ENCODE measurements at regions of chr21 and their contacts with region 1.

Region 1: DNA sequence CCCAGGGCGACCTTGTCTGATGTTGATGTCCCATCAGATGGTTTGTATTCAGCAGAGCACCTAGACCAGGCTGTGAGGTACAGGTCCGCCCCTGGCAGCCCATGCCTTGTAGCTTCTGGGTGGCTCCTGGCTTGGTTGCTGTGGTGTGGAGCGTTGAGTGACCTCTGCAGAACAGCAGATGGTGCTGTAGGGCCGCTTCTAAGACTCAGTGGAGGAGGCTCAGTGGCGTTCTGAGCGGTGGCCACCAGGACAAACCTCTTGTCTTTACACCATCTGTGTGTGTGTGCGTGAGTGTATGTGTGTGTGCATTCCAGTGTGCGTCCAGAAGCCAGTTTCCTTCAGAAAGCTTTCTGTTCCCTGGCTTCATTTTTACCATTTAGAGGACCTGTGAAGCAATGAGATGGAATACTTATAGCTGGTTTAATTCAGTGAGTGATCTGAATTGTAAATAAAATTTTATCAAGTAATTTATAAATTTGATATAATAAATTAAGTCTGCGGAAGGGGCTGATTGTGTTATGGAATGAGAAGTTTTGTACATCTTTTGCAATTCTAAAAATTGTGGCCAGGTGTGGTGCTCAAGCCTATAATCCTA is 66.1 kb downstream of the ADARB1 start:
- DNase-seq: peak; percentile 76
- H3K4me3 Mint-ChIP-seq: no peak overlapping the region
- H3K27ac Mint-ChIP-seq: peak overlapping the region; percentile 6
- H3K4me1 Mint-ChIP-seq: peaks cover 6% of the 10 kb centered on the region
- H3K27me3 Mint-ChIP-seq: no peaks in the 10 kb centered on the region

Region 2: DNA sequence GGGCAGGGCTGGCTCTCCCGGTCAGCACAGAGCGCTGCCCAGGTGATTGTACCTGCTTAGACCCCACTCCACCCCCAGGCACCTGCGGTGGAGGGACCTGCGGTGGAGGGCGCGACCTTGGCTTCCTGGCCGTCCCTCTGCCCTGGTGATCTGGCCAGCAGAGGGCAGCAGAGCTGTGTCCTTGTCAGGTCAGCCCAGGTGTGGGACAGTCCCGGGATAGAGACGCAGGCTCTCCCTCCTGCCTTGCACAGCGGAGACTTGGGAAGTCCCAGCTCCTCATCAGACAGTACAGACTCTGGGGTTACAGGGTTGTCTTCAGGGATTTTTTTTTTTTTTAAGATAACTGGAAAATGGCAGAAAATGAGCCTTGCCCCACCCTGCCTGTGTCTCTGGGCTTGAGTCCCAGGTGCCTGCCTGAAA is 190.7 kb before region 1 on chr21:
- CTCF ChIA-PET with region 1: interaction called, 30 read pairs
- POLR2A ChIA-PET with region 1: no interaction called
- DNase-seq: peak; percentile 86
- H3K4me3 Mint-ChIP-seq: no peak overlapping the region
- H3K27ac Mint-ChIP-seq: no peak overlapping the region
- H3K4me1 Mint-ChIP-seq: peaks cover 11% of the 10 kb centered on the region
- H3K27me3 Mint-ChIP-seq: no peaks in the 10 kb centered on the region

Region 3: GRCh38 chr21:45078877-45079281 is 61.6 kb before region 1 on chr21:
- CTCF ChIA-PET with region 1: interaction called, 11 read pairs
- POLR2A ChIA-PET with region 1: no interaction called
- DNase-seq: peak; percentile 90
- H3K4me3 Mint-ChIP-seq: peak overlapping the region; percentile 61
- H3K27ac Mint-ChIP-seq: peak overlapping the region; percentile 98
- H3K4me1 Mint-ChIP-seq: peaks cover 84% of the 10 kb centered on the region
- H3K27me3 Mint-ChIP-seq: no peaks in the 10 kb centered on the region

Region 4: DNA sequence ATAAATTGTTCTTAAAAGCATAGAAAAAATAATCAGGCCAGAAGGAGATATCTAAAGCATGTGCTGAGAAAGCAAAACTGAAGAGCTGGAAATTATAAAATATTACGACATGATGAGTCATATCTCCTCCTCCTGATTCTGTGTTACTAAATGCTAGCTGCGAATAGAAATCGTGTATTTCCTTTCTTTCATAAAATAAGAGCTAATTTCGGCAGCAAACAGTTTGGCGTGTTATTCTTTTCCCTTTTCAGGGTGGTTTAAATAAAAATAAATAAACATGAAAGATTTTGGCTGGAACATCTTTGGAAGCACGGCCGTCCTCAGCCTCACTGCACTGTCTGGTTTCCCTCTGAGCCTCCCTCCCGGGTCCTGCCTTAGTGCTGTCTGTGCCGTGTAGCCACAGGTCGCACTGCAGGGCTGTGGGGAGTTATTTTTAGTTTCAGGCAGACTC is 10.1 kb before region 1 on chr21:
- CTCF ChIA-PET with region 1: interaction called, 81 read pairs
- POLR2A ChIA-PET with region 1: no interaction called
- DNase-seq: no peak
- H3K4me3 Mint-ChIP-seq: no peak overlapping the region
- H3K27ac Mint-ChIP-seq: no peak overlapping the region
- H3K4me1 Mint-ChIP-seq: peaks cover 23% of the 10 kb centered on the region
- H3K27me3 Mint-ChIP-seq: no peaks in the 10 kb centered on the region

Region 5: DNA sequence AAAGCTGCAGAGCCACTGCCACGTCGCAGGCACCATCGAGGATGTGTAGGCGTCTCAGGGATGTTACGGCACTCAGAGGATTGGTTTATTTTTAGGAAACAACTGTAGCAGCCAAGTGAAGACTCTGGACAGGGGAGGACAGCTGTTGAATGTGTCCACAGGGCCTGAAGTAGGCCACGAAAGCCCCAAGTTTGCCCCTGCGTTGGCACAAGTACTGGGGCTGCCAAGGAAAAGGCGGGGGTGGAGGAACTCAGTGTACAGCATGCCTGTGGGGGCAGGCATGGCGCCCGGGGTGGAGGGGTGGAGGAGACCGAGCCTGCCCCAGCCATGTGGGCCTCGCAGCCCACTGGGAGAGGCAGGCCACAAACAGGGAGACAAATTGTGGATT is 23.7 kb after region 1 on chr21:
- CTCF ChIA-PET with region 1: no interaction called
- POLR2A ChIA-PET with region 1: no interaction called
- DNase-seq: no peak
- H3K4me3 Mint-ChIP-seq: no peak overlapping the region
- H3K27ac Mint-ChIP-seq: no peak overlapping the region
- H3K4me1 Mint-ChIP-seq: peaks cover 7% of the 10 kb centered on the region
- H3K27me3 Mint-ChIP-seq: no peaks in the 10 kb centered on the region

Measured in activated CD4-positive, alpha-beta T cell treated with anti-CD3 and anti-CD28 coated beads, Interleukin-2, amount 10 ng/mL, durations not matched to agents 7 days and 5 days (primary cell).